Naive thymus-derived CD4-positive, alpha-beta T cell (primary cell): ENCODE measurements at regions of chr18 and their contacts with region 1.

Region 1: GRCh38 chr18:23356915-23357601 is 96.0 kb upstream of the RIOK3 start:
- DNase-seq: no peak
- ATAC-seq: no peak
- H3K4me3 ChIP-seq: no peak overlapping the region
- H3K4me3 Mint-ChIP-seq: no peak overlapping the region
- H3K27ac ChIP-seq: no peak overlapping the region
- H3K27ac Mint-ChIP-seq: no peak overlapping the region
- H3K4me1 ChIP-seq: peaks cover 0 to 7% of the 10 kb centered on the region in 2 donors
- H3K4me1 Mint-ChIP-seq: peaks cover 5 to 21% (median 12%) of the 10 kb centered on the region in 7 donors
- H3K27me3 ChIP-seq: no peaks in the 10 kb centered on the region
- H3K27me3 Mint-ChIP-seq: no peaks in the 10 kb centered on the region

Region 2: GRCh38 chr18:23032030-23032582 is 325.0 kb before region 1 on chr18:
- CTCF ChIA-PET with region 1: interaction called, 7 read pairs
- POLR2A ChIA-PET with region 1: no interaction called
- intact Hi-C with region 1: loop called (anchors 1 kb)
- DNase-seq: no peak
- ATAC-seq: no peak
- H3K4me3 ChIP-seq: no peak overlapping the region
- H3K4me3 Mint-ChIP-seq: no peak overlapping the region
- H3K27ac ChIP-seq: no peak overlapping the region
- H3K27ac Mint-ChIP-seq: peak overlapping the region in 2 of 9 donors; percentile 51
- H3K4me1 ChIP-seq: no peaks in the 10 kb centered on the region
- H3K4me1 Mint-ChIP-seq: peaks cover 0 to 12% (median 8%) of the 10 kb centered on the region in 7 donors
- H3K27me3 ChIP-seq: no peaks in the 10 kb centered on the region
- H3K27me3 Mint-ChIP-seq: no peaks in the 10 kb centered on the region

Region 3: DNA sequence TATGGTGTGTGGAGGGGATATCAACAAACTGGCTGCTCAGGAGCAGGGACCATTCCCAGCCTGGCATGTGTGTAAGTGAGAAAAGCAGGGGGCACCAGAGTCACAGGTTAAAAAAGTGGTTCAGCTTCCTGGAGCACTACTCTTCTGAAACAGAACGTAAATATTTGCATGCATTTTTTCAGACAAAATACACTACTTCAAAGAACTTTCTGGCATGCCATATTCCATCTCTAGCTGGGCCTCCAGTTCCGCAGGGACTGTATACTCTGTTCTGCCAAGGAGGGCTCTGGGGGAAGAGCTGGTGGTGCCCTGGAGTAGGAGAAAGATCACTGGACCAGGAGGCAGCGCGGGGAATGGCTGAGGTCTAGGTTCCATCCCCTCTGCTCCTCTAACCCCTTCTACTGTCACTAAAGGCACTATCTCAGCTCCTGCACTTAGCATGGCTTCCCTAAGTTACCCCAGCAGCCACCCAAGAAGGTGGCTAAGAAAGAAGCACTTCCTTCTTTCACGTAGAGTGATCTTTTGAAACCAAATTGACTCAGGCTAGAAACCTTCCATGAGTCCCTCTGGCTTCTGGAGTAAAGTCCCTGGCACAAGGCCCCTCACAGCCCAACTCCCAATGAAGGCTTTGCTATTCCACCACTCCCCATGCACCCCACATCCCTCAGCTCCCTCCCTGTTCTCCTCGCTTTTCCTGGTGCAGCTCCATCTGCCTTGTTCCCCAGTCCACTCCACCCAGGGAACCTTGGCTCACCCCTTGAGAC is 279.4 kb before region 1 on chr18:
- CTCF ChIA-PET with region 1: no interaction called
- POLR2A ChIA-PET with region 1: no interaction called
- intact Hi-C with region 1: loop called in 1 of 2 experiments (anchors 1 kb)
- DNase-seq: peak in 1 of 9 donors; percentile 16
- ATAC-seq: no peak
- H3K4me3 ChIP-seq: no peak overlapping the region
- H3K4me3 Mint-ChIP-seq: peak overlapping the region in 6 of 10 donors; percentile 17 to 75 (median 32)
- H3K27ac ChIP-seq: no peak overlapping the region
- H3K27ac Mint-ChIP-seq: peak overlapping the region in 2 of 9 donors; percentile 33 to 76
- H3K4me1 ChIP-seq: peaks cover 5 to 18% of the 10 kb centered on the region in 2 donors
- H3K4me1 Mint-ChIP-seq: peaks cover 18 to 52% (median 42%) of the 10 kb centered on the region in 7 donors
- H3K27me3 ChIP-seq: no peaks in the 10 kb centered on the region
- H3K27me3 Mint-ChIP-seq: no peaks in the 10 kb centered on the region

Region 4: GRCh38 chr18:23231340-23232021 is 125.6 kb before region 1 on chr18:
- CTCF ChIA-PET with region 1: no interaction called
- POLR2A ChIA-PET with region 1: no interaction called
- intact Hi-C with region 1: loop called in 1 of 2 experiments (anchors 2 kb)
- DNase-seq: peak; percentile 14 to 86 (median 70)
- ATAC-seq: peak; percentile 93
- H3K4me3 ChIP-seq: peak overlapping the region; percentile 10
- H3K4me3 Mint-ChIP-seq: peak overlapping the region in 9 of 10 donors; percentile 7 to 80 (median 55)
- H3K27ac ChIP-seq: no peak overlapping the region
- H3K27ac Mint-ChIP-seq: peak overlapping the region; percentile 76 to 96 (median 88)
- H3K4me1 ChIP-seq: peaks cover 8 to 14% of the 10 kb centered on the region in 2 donors
- H3K4me1 Mint-ChIP-seq: peaks cover 0 to 78% (median 21%) of the 10 kb centered on the region in 7 donors
- H3K27me3 ChIP-seq: no peaks in the 10 kb centered on the region
- H3K27me3 Mint-ChIP-seq: no peaks in the 10 kb centered on the region

Region 5: DNA sequence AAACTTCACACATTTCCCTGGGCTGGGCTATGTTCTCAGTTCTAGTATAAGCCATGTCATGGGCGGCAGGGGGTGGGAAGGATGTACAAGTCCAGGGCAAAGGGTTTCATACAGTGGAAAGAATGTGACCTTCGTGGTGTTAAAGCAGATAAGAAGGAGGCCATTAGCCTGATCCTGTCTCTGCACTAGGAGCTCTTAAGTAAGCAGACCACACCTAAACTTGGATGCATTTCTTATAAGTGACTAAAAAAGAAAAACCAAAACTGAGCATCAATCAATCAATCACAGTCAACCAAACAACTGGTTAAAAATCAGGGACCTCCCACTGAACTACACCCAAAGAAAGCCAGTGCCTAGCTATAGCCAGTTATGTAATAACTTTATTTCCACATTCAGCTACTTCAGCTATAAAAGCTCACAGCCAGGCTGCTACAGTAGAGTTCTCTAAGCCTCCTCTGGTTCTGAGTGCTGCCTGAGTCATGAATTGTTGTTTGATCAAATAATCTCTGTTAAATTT is 49.3 kb after region 1 on chr18:
- CTCF ChIA-PET with region 1: interaction called, 4 read pairs
- POLR2A ChIA-PET with region 1: no interaction called
- intact Hi-C with region 1: loop called (anchors 1 to 5 kb)
- DNase-seq: no peak
- ATAC-seq: no peak
- H3K4me3 ChIP-seq: no peak overlapping the region
- H3K4me3 Mint-ChIP-seq: no peak overlapping the region
- H3K27ac ChIP-seq: no peak overlapping the region
- H3K27ac Mint-ChIP-seq: no peak overlapping the region
- H3K4me1 ChIP-seq: no peaks in the 10 kb centered on the region
- H3K4me1 Mint-ChIP-seq: peaks cover 0 to 7% (median 1%) of the 10 kb centered on the region in 7 donors
- H3K27me3 ChIP-seq: no peaks in the 10 kb centered on the region
- H3K27me3 Mint-ChIP-seq: no peaks in the 10 kb centered on the region

Region 6: DNA sequence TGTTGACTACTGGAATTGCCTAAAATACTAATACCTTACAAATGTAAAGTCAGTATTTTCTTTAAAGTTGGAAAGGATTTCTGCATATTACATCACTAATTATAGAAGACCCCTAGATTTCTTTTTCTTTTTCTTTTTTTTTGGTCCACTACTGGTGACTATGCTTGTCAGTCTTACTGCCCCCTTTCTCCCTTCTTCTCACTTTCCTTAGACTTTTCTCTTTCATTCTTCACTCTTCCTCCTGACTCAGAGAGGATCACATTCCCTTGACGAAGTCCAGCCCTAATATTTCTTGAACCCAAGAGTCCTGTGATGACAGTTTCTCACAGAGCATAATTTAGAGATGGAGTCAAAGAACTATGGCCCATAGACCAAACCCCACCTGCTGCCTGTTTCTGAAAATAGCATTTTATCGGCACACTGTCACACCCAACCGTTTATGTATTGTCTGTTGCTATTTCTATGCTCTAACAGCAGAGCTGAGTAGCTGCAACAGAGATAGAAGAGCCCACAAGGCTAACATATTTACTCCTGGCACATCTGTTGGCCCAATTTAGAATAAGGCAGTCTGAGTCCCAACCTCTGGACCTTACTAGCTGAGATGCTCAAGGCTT is 55.4 kb after region 1 on chr18:
- CTCF ChIA-PET with region 1: no interaction called
- POLR2A ChIA-PET with region 1: no interaction called
- intact Hi-C with region 1: loop called (anchors 1 to 5 kb)
- DNase-seq: no peak
- ATAC-seq: no peak
- H3K4me3 ChIP-seq: no peak overlapping the region
- H3K4me3 Mint-ChIP-seq: no peak overlapping the region
- H3K27ac ChIP-seq: no peak overlapping the region
- H3K27ac Mint-ChIP-seq: no peak overlapping the region
- H3K4me1 ChIP-seq: no peaks in the 10 kb centered on the region
- H3K4me1 Mint-ChIP-seq: peaks cover 0 to 8% (median 0%) of the 10 kb centered on the region in 7 donors
- H3K27me3 ChIP-seq: no peaks in the 10 kb centered on the region
- H3K27me3 Mint-ChIP-seq: no peaks in the 10 kb centered on the region